Right cardiac atrium (tissue), 5 donors: ENCODE measurements at regions of chr4 and their contacts with region 1.

Region 1: DNA sequence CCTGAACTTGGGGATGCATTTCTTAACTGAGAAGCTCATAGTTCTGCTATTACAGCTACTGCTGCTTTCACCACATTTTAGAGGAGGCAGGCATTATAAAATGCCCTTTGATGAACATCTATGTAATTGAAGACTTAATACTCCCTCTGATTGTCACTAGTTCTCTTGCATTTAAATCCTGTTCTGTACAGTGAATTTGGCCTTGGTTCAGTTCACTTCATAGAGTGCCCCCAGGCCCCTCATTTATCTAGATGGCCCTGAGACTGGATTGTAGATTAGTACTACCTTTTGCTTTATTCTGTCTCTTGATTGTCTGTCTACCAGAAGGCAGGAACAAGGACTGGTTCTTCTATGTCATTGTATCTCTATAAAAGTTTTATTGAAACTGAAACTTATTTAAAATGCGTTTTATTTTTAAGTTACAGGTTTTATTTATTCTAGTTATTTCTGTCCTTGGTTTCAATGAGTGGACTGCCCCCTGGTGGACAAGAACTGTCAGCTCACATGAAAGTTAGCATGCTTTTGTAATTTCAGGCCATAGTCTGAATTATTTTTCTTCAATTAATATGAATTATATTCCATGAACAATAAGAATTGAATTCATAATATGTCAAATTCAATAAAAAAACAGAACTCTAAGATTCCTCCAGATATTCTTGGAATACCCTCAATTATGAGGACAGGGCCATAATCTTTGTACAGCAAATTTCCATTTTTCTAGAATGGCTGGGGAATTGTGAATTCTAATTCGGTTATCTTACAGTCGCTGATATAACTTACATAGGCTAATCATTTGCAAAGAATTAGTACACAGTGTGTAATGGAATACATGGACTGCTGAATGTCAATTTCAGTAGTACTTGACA is 47.2 kb upstream of the TMEM33 start:
- DNase-seq: peak in 1 of 3 donors; percentile 55
- ATAC-seq: no peak
- H3K4me3 ChIP-seq: no peak overlapping the region
- H3K27ac ChIP-seq: no peak overlapping the region
- H3K4me1 ChIP-seq: no peaks in the 10 kb centered on the region
- H3K27me3 ChIP-seq: no peaks in the 10 kb centered on the region

Region 2: DNA sequence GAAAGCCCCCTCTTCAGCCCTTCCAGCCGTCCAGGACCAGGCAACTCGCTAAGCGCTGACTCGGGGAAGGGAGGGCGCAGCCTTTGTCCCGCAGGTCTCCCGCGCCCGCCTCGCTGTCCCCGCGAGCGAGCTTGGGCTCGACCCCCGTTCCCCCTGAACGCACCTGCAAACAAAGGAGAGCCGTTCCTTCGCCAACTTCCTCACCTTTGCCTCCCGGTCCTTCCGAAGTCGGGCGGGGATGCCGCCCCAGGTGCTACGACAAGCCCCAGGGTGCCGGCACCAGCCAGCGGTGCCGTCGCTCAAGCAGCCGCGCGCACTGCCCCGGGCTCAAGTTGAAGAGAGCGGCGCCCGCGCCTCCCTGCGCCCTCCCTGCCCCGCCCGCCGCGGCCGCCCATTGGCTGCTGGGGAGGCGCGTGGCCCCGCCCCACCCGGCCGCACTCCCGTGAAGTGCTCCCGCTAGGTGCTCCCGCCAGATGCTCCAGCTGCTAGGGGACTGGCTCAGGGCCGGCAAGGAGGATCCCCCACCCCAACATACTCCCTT is 1031.2 kb before region 1 on chr4:
- intact Hi-C with region 1: no loop called
- DNase-seq: peak; percentile 78 to 92 (median 90)
- ATAC-seq: peak; percentile 98 to 99
- H3K4me3 ChIP-seq: peak overlapping the region; percentile 23
- H3K27ac ChIP-seq: no peak overlapping the region
- H3K4me1 ChIP-seq: peaks cover 4% of the 10 kb centered on the region
- H3K27me3 ChIP-seq: no peaks in the 10 kb centered on the region

Region 3: GRCh38 chr4:41678086-41678816 is 209.8 kb before region 1 on chr4:
- intact Hi-C with region 1: no loop called
- DNase-seq: no peak
- ATAC-seq: no peak
- H3K4me3 ChIP-seq: no peak overlapping the region
- H3K27ac ChIP-seq: no peak overlapping the region
- H3K4me1 ChIP-seq: no peaks in the 10 kb centered on the region
- H3K27me3 ChIP-seq: no peaks in the 10 kb centered on the region

Region 4: DNA sequence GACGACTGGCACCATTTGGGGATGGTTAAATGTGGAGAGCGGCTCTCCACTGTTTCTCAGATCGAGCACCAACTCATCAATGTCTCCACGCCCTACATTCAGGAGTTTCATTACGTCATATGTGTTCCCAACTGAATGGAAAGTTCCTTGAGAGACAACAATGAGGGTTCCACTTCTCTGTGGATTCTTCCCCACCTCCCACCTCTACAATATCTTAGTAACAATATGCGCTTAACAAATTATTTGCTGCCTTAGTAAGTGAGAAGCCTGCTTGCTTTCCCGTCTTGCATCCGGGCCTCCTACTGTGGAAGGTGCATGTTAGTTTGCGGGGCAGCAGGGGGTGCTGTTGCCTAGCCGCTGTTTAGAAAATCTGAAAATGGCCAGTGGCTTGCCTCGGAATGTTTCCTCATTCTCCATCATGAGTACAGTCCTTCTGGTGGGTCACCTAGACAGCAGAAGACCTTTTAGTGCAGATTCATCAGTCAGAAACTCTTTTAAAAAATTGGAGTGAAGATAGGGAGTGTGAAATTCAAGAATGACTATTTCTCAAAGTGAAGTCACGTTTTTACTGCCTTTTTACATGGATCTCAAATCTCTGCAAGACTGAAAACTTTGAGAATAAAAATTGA is 195.2 kb before region 1 on chr4:
- intact Hi-C with region 1: loop called (anchors 5 kb)
- DNase-seq: peak; percentile 31 to 65 (median 43)
- ATAC-seq: peak; percentile 71 to 73
- H3K4me3 ChIP-seq: no peak overlapping the region
- H3K27ac ChIP-seq: no peak overlapping the region
- H3K4me1 ChIP-seq: no peaks in the 10 kb centered on the region
- H3K27me3 ChIP-seq: no peaks in the 10 kb centered on the region